ENCODE measurements at regions of chr7 and their contacts with region 1.

Region 1: GRCh38 chr7:2608921-2609411 is 22.8 kb upstream of the TTYH3 start:
- DNase-seq: peak; percentile 76
- H3K4me3 ChIP-seq: no peak overlapping the region
- H3K27ac ChIP-seq: no peak overlapping the region
- H3K4me1 ChIP-seq: peaks cover 13% of the 10 kb centered on the region
- H3K27me3 ChIP-seq: no peaks in the 10 kb centered on the region
- CTCF ChIP-seq: peak; percentile 70 to 73
- POLR2A ChIP-seq: no peak

Region 2: GRCh38 chr7:2477447-2478398 is 131.2 kb before region 1 on chr7:
- CTCF ChIA-PET with region 1: interaction called, 5 read pairs
- POLR2A ChIA-PET with region 1: no interaction called
- dilution Hi-C with region 1: no loop called
- intact Hi-C with region 1: loop called (anchors 2 kb)
- DNase-seq: peak; percentile 53
- H3K4me3 ChIP-seq: no peak overlapping the region
- H3K27ac ChIP-seq: no peak overlapping the region
- H3K4me1 ChIP-seq: no peaks in the 10 kb centered on the region
- H3K27me3 ChIP-seq: peaks cover 0 to 4% of the 10 kb centered on the region in 2 experiments
- CTCF ChIP-seq: peak; percentile 81 to 95
- POLR2A ChIP-seq: no peak

Region 3: GRCh38 chr7:2626498-2627117 is 17.6 kb after region 1 on chr7:
- CTCF ChIA-PET with region 1: interaction called, 42 read pairs
- POLR2A ChIA-PET with region 1: no interaction called
- dilution Hi-C with region 1: no loop called
- intact Hi-C with region 1: loop called (anchors 1 kb)
- DNase-seq: peak; percentile 87
- H3K4me3 ChIP-seq: no peak overlapping the region
- H3K27ac ChIP-seq: peak overlapping the region; percentile 83
- H3K4me1 ChIP-seq: peaks cover 24% of the 10 kb centered on the region
- H3K27me3 ChIP-seq: no peaks in the 10 kb centered on the region
- CTCF ChIP-seq: no peak
- POLR2A ChIP-seq: peak; percentile 37

Region 4: GRCh38 chr7:2641406-2642393 is 32.7 kb after region 1 on chr7:
- CTCF ChIA-PET with region 1: interaction called, 55 read pairs
- POLR2A ChIA-PET with region 1: no interaction called
- dilution Hi-C with region 1: no loop called
- intact Hi-C with region 1: loop called (anchors 2 kb)
- DNase-seq: peak; percentile 99
- H3K4me3 ChIP-seq: no peak overlapping the region
- H3K27ac ChIP-seq: peak overlapping the region; percentile 94
- H3K4me1 ChIP-seq: peaks cover 41% of the 10 kb centered on the region
- H3K27me3 ChIP-seq: no peaks in the 10 kb centered on the region
- CTCF ChIP-seq: no peak
- POLR2A ChIP-seq: no peak

Region 5: DNA sequence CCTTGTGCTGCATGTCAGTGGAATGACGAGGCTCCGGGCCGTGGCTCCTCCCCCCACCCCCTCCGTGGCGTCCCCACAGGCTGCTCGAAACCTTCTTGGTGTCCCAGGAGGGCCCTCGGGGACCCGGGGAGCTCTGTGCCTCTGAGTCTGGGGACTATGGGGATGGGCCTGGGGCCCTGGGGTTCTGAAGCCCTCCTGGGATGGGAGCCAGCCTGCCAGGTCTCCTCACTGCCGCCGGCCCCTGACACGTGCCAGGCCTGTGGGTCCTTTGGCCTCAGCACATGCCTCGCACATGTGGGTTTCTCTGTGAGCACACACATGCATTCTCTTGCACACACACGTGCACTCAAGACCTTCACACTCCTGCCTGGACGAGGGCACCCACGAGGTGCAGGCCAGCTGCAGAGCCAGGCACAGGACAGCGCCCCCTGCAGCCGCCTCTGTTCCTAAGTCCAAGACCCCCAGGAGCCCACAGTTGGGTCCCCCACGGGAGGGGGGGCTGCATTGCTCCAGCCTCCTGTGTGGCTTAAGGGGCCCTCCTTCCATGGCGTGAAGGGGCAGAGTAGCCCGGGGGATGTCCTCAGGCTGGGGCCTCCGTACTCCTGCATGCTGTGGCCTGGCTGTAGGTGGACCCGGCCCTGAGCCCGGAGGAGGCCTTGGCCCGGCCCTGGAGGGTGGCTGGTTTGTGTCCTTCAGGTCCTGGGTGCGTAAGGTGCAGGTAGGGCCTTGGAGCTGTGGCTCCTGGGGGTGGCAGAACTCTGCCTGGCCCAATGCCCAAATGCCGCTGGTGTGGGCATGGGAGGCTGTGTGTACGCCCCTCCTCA is 51.8 kb after region 1 on chr7:
- CTCF ChIA-PET with region 1: interaction called, 10 read pairs
- POLR2A ChIA-PET with region 1: no interaction called
- dilution Hi-C with region 1: no loop called
- intact Hi-C with region 1: loop called (anchors 5 kb)
- DNase-seq: no peak
- H3K4me3 ChIP-seq: no peak overlapping the region
- H3K27ac ChIP-seq: no peak overlapping the region
- H3K4me1 ChIP-seq: peaks cover 14% of the 10 kb centered on the region
- H3K27me3 ChIP-seq: no peaks in the 10 kb centered on the region
- CTCF ChIP-seq: peak; percentile 28 to 34
- POLR2A ChIP-seq: no peak

Region 6: DNA sequence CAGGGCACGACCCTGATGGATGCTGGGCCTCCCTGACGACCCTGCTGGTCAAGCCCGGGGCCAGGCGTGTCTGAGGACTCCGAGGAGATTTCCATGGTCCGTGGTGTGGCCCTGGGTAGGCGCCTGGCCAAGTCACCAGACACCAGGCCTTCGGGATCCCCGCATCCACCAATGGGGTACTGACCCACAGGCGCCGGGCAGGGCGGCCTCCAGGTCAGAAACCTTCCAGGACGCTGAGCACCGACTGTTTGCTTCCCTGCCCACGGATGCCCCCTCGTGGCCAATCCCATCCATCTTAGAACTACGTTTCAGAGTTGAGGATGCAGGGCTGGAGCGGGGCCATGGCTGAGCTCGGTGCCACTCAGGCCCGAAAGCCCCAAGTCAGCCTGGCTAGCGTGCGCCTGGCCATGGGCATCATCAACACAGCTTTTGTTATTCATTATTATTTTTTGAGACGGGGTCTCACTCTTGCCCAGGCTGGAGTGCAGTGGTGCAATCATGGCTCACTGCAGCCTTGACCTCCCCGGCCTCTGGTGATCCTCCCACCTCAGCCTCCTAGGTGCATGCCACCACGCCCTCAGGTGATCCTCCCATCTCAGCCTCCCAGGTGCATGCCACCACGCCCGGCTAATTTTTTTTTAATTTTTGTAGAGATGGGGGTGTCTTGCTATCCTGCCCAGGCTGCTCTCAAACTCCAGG is 72.0 kb after region 1 on chr7:
- CTCF ChIA-PET with region 1: interaction called, 33 read pairs
- POLR2A ChIA-PET with region 1: no interaction called
- dilution Hi-C with region 1: no loop called
- intact Hi-C with region 1: loop called (anchors 2 kb)
- DNase-seq: peak; percentile 65
- H3K4me3 ChIP-seq: no peak overlapping the region
- H3K27ac ChIP-seq: no peak overlapping the region
- H3K4me1 ChIP-seq: no peaks in the 10 kb centered on the region
- H3K27me3 ChIP-seq: no peaks in the 10 kb centered on the region
- CTCF ChIP-seq: peak; percentile 65 to 83
- POLR2A ChIP-seq: no peak